ENCODE measurements at regions of chr3 and their contacts with region 1.

Region 1: DNA sequence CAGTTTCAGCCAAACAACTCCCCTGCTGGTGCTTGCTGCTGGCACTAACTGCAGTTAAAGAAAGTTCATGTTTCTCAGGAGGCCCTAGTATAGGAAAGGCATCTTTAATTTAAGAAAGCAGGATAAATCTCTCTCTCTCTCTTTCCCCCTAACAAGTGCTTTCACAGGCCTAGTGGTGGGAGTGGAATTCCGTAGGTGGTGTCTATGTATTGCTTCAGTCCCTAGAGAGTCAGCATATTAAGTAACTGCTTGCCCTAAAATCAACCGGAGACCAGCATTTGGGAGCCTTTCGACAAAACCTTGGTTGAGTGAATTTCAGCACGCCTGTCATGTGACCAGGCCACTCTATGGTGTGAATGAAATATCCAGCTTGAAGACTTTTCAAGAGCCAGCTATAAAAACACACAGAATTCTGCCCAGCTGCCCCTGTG is 169.2 kb upstream of the TGFBR2 start:
- DNase-seq: peak; percentile 79
- H3K4me3 ChIP-seq: no peak overlapping the region
- H3K27ac ChIP-seq: peak overlapping the region; percentile 74 to 89 (median 82)
- H3K4me1 ChIP-seq: peaks cover 0 to 66% (median 53%) of the 10 kb centered on the region in 4 donors
- H3K27me3 ChIP-seq: no peaks in the 10 kb centered on the region
- CTCF ChIP-seq: peak in 1 of 4 experiments; percentile 11
- EP300 ChIP-seq: no peak
- POLR2A ChIP-seq: no peak

Region 2: DNA sequence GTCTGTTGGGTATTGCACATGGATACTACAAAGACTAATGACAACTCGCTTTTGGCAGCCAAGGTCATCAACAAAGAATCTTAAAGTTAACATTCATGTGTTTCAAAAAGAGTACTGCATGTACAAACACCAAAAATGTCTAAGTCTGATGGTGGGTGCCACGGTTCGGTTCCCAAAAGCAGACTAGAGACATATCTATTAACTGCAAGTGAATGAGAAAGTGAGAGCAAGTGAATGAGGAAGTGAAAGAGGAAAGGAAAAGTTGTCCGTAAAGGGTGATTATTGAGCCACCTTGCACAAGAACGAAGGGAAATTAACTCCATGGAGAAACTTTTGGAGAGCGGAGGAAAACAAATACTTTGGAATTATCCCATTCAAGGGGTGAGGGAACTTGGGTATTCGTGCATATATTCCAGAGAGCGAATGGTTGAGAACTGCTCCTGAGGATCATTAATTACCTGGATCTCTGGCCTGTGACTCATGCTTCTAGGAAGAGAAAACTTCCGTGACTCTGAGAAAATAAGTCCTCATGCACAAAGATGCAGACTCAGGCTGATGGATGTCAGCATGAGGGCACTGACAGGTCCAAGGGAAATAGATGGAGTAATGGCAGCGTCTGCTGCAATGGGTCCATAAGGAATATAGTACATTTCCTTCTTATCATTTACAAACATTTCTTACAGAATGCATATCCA is 167.3 kb before region 1 on chr3:
- intact Hi-C with region 1: loop called (anchors 5 kb)
- DNase-seq: no peak
- H3K4me3 ChIP-seq: no peak overlapping the region
- H3K27ac ChIP-seq: peak overlapping the region in 2 of 4 donors; percentile 71 to 76
- H3K4me1 ChIP-seq: peaks cover 0 to 50% (median 15%) of the 10 kb centered on the region in 4 donors
- H3K27me3 ChIP-seq: no peaks in the 10 kb centered on the region
- CTCF ChIP-seq: no peak
- EP300 ChIP-seq: no peak
- POLR2A ChIP-seq: no peak

Region 3: GRCh38 chr3:30496066-30496966 is 59.1 kb after region 1 on chr3:
- intact Hi-C with region 1: loop called (anchors 2 kb)
- DNase-seq: peak; percentile 92
- H3K4me3 ChIP-seq: peak overlapping the region in 2 of 4 donors; percentile 15 to 21
- H3K27ac ChIP-seq: peak overlapping the region; percentile 86 to 93 (median 88)
- H3K4me1 ChIP-seq: peaks cover 0 to 82% (median 75%) of the 10 kb centered on the region in 4 donors
- H3K27me3 ChIP-seq: no peaks in the 10 kb centered on the region
- CTCF ChIP-seq: no peak
- EP300 ChIP-seq: peak; percentile 89 to 96 (median 92)
- POLR2A ChIP-seq: no peak

Region 4: DNA sequence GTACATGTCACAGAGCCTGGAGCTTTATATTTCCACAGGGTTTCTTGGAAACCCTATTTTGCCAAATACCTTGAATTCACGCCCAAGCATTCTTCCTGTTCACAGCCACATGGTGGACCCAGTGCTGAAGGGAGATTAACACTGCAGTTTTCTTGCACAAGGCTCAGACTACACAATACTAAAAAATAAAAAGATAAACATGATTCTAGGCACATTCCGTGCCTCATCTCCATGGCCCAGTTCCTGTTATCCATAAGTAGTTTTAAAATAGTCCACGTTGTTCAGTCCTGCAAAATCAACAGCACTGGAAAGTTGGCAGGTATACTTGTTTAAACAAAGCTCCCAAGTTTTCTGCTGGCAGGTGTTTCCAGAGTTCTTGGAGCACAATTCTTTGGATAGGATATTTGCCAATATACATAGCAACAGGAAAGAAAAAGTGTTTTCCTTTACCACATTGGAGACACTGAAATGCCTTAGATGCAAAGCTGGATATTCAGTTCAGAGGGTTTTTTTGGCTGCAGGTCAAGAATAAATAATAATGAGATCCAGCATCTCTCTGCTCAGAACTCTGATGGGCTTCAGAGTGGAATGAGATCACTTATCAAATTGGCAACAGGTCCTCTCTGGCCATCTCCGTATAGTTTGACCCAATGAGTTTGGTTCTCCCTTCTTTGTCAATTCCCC is 81.1 kb after region 1 on chr3:
- intact Hi-C with region 1: loop called (anchors 2 kb)
- DNase-seq: peak; percentile 88
- H3K4me3 ChIP-seq: no peak overlapping the region
- H3K27ac ChIP-seq: peak overlapping the region; percentile 74 to 85 (median 82)
- H3K4me1 ChIP-seq: peaks cover 0 to 69% (median 41%) of the 10 kb centered on the region in 4 donors
- H3K27me3 ChIP-seq: no peaks in the 10 kb centered on the region
- CTCF ChIP-seq: no peak
- EP300 ChIP-seq: peak; percentile 84 to 97 (median 91)
- POLR2A ChIP-seq: no peak

Measured in sigmoid colon (tissue), 7 donors.